Activated CD4-positive, alpha-beta T cell treated with anti-CD3 and anti-CD28 coated beads, Interleukin-2, amount 10 ng/mL, durations not matched to agents 7 days and 5 days (primary cell): ENCODE measurements at regions of chr5 and their contacts with region 1.

Region 1: GRCh38 chr5:95986001-95986400 is 24.4 kb upstream of the ELL2 start:
- DNase-seq: no peak
- H3K4me3 Mint-ChIP-seq: no peak overlapping the region
- H3K27ac Mint-ChIP-seq: no peak overlapping the region
- H3K4me1 Mint-ChIP-seq: no peaks in the 10 kb centered on the region
- H3K27me3 Mint-ChIP-seq: no peaks in the 10 kb centered on the region

Region 2: GRCh38 chr5:95892780-95893354 is 93.1 kb before region 1 on chr5:
- CTCF ChIA-PET with region 1: no interaction called
- POLR2A ChIA-PET with region 1: no interaction called
- DNase-seq: peak; percentile 45
- H3K4me3 Mint-ChIP-seq: no peak overlapping the region
- H3K27ac Mint-ChIP-seq: no peak overlapping the region
- H3K4me1 Mint-ChIP-seq: peaks cover 8% of the 10 kb centered on the region
- H3K27me3 Mint-ChIP-seq: no peaks in the 10 kb centered on the region

Region 3: DNA sequence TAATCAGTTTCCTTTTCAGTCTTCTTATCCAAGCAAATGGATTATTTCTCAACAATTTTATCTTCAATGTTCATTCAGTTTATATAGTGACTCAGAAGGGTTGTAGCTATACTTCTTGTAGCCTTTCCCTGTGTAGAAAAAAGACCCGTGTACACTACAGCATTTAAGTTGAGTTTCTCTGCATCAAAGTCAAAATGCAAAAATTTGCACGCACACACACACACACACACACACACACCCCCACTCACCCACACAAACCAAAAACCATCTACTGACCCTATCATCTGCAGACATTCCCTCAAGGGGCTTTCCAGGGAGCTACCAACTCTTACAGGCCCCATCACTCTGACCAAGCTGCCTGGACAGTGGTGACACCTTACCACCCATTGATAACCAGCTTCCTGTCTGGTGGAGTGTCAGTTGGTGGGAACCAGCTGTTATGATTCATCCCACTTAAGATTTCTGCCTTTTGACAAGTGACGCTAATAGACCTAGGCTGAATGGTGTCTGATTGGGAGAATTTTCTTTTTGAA is 12.1 kb before region 1 on chr5:
- CTCF ChIA-PET with region 1: interaction called, 10 read pairs
- POLR2A ChIA-PET with region 1: no interaction called
- DNase-seq: no peak
- H3K4me3 Mint-ChIP-seq: no peak overlapping the region
- H3K27ac Mint-ChIP-seq: no peak overlapping the region
- H3K4me1 Mint-ChIP-seq: peaks cover 7% of the 10 kb centered on the region
- H3K27me3 Mint-ChIP-seq: peaks cover 3% of the 10 kb centered on the region

Region 4: DNA sequence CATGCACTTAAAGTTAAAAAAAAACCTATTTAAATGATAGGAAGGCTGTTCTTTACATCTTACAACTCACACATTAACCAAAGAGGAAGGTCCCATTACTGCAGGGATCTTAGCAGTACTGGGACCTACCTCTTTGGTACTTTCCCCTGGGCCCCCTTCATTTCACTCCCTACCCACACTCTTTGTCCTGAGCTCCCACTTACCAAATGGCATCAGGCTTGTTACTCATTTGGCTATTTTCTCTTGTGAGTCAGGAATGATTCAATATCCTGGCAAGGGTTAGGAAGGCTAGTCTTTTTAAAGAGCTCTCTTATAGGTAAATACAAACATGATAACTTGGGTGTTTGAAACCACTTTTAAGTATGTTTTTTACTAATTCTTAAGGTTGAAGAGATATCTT is 93.1 kb after region 1 on chr5:
- CTCF ChIA-PET with region 1: no interaction called
- POLR2A ChIA-PET with region 1: no interaction called
- DNase-seq: no peak
- H3K4me3 Mint-ChIP-seq: no peak overlapping the region
- H3K27ac Mint-ChIP-seq: no peak overlapping the region
- H3K4me1 Mint-ChIP-seq: peaks cover 13% of the 10 kb centered on the region
- H3K27me3 Mint-ChIP-seq: no peaks in the 10 kb centered on the region

Region 5: GRCh38 chr5:96662725-96663513 is 676.9 kb after region 1 on chr5:
- CTCF ChIA-PET with region 1: no interaction called
- POLR2A ChIA-PET with region 1: no interaction called
- DNase-seq: peak; percentile 84
- H3K4me3 Mint-ChIP-seq: peak overlapping the region; percentile 96
- H3K27ac Mint-ChIP-seq: peak overlapping the region; percentile 99
- H3K4me1 Mint-ChIP-seq: peaks cover 57% of the 10 kb centered on the region
- H3K27me3 Mint-ChIP-seq: peaks cover 10% of the 10 kb centered on the region